Uterus (tissue), 4 donors: ENCODE measurements at regions of chr19 and their contacts with region 1.

Region 1: DNA sequence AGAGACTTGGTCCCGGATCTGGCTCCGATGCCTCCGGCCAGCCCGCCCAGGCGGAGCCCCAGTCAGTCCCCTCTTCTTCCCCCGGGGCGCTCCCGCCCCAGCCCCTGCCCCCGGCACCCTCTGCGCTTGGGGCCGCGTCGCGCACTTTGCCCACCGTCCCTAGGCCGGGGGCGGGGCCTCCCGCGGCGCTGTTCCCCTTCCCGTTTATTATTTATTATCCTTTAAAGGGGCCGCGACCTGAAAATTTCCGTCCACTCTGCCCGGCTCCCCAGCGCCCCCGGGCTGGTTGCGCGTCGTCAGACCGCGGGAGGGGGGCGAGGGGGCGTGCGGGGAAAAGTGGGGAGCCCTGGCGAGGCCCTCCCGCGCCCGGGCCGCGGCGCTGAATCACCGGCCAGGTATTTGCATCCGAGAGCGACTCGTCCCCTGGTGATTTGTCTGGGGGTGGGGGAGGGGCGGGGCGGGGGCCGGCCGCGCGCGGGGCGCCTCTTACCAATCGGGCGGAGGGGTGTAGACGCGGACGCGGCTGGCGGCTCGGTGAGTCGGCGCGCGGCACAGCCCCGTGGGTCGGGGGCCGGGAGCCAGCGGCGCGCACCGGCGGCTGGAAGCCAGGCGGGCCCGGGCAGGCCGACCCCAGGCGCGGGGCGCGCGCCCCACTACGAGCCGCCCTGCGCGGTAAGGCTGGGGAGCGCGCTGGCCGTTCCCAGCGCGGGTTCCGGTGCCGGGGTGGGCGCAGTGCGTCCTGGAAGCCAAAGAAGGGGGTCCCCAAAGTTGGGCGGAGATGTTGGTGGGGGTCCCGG is at the start of gene ARID3A:
- DNase-seq: peak; percentile 77 to 78
- H3K4me3 ChIP-seq: peak within 1 kb of the TSS; percentile 53 to 74
- H3K27ac ChIP-seq: peak within 1 kb of the TSS; percentile 79 to 80
- H3K4me1 ChIP-seq: peaks cover 0 to 6% of the 10 kb centered on the region in 2 donors
- H3K27me3 ChIP-seq: peaks cover 3 to 8% of the 10 kb centered on the region in 2 donors
- CTCF ChIP-seq: peak in 1 of 4 experiments; percentile 2
- POLR2A ChIP-seq: peak in 1 of 2 donors; percentile 65
- total RNA-seq, gene ARID3A: 1.3 to 22.0 (median 3.8) TPM

Region 2: DNA sequence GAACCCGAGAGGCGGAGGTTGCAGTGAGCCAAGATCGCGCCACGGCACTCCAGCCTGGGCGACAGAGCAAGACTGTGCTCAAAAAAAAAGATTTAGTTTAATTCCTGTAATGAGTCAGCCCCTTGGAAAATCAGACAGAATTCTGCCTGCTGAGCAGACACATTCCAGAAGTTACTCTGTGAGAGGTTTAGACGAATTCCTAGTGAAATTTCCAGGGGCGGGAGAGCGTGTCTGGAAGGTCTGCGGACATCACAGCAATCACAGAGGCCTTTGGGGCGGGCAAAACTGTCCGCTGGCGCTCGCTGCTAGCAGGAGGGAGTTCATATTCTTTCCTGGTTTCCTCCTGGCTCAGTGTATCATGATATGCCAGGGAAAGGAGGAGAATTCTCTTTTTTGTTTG is 157.3 kb before region 1 on chr19:
- intact Hi-C with region 1: loop called (anchors 10 kb)
- DNase-seq: no peak
- H3K4me3 ChIP-seq: no peak overlapping the region
- H3K27ac ChIP-seq: peak overlapping the region in 1 of 2 donors; percentile 25
- H3K4me1 ChIP-seq: no peaks in the 10 kb centered on the region
- H3K27me3 ChIP-seq: no peaks in the 10 kb centered on the region
- CTCF ChIP-seq: no peak
- POLR2A ChIP-seq: no peak

Region 3: DNA sequence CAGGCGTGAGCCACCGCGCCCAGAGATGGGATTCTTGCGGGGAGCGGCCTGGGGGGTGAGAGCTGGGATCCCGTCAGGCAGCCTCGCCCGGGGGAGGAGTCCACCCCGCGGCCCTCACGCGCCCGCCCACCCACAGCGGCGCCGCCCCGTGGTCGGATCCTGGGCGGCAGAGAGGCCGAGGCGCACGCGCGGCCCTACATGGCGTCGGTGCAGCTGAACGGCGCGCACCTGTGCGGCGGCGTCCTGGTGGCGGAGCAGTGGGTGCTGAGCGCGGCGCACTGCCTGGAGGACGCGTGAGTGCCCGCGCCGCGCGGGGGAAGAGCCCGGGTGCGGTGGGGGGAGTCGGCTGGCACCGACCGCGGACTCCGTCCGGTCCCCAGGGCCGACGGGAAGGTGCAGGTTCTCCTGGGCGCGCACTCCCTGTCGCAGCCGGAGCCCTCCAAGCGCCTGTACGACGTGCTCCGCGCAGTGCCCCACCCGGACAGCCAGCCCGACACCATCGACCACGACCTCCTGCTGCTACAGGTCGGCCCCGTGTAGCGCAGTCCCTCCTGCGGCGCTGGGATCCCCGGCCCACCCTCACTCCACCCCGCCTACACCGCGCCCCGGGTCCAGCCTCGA is 65.1 kb before region 1 on chr19:
- intact Hi-C with region 1: no loop called
- DNase-seq: no peak
- H3K4me3 ChIP-seq: peak overlapping the region in 1 of 2 donors; percentile 7
- H3K27ac ChIP-seq: peak overlapping the region in 1 of 2 donors; percentile 27
- H3K4me1 ChIP-seq: peaks cover 0 to 17% of the 10 kb centered on the region in 2 donors
- H3K27me3 ChIP-seq: peaks cover 0 to 25% of the 10 kb centered on the region in 2 donors
- CTCF ChIP-seq: peak in 1 of 4 experiments; percentile 31
- POLR2A ChIP-seq: peak in 1 of 2 donors; percentile 25

Region 4: DNA sequence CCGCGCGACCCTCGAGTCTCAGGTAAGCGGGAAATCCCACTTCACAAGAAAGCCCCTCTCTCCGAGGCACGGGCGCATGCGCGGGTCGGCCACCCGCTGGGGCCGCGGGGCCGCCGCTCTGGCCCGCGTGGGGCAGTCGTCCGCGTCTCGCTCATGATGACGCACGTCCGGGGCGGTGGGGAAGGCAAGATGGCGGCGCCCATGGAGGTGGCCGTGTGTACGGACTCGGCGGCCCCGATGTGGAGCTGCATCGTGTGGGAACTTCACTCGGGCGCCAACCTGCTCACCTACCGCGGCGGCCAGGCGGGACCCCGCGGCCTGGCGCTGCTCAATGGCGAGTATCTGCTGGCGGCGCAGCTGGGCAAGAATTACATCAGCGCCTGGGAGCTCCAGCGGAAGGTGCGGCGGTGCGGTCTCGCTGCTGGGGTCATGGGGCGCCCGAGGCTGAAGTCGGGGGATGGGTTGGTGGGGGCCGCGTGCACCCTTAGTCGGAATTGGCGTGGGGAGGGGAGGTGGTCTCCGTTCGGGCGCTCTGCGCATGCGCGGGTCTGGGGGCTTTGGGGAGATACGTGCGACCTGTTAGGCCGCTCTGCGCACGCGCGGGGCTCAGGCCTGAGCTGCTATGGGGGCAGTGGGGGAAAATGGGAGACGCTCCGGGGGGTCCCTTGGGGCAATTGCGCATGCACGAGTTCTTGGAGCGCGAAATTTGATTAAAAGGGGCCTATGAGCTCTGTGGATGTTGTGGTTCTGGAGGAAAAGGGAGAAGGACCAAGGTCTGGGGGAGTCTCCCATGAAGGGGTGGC is 58.6 kb after region 1 on chr19 and contains the start of gene WDR18:
- intact Hi-C with region 1: loop called (anchors 2 kb)
- DNase-seq: peak; percentile 93
- H3K4me3 ChIP-seq: peak within 1 kb of the TSS; percentile 84 to 100
- H3K27ac ChIP-seq: peak within 1 kb of the TSS; percentile 81 to 91
- H3K4me1 ChIP-seq: peaks cover 6 to 12% of the 10 kb centered on the region in 2 donors
- H3K27me3 ChIP-seq: no peaks in the 10 kb centered on the region
- CTCF ChIP-seq: peak in 3 of 4 experiments; percentile 7 to 66 (median 63)
- POLR2A ChIP-seq: peak; percentile 43 to 75
- total RNA-seq, gene WDR18: 13.6 to 34.9 (median 17.3) TPM

Region 5: DNA sequence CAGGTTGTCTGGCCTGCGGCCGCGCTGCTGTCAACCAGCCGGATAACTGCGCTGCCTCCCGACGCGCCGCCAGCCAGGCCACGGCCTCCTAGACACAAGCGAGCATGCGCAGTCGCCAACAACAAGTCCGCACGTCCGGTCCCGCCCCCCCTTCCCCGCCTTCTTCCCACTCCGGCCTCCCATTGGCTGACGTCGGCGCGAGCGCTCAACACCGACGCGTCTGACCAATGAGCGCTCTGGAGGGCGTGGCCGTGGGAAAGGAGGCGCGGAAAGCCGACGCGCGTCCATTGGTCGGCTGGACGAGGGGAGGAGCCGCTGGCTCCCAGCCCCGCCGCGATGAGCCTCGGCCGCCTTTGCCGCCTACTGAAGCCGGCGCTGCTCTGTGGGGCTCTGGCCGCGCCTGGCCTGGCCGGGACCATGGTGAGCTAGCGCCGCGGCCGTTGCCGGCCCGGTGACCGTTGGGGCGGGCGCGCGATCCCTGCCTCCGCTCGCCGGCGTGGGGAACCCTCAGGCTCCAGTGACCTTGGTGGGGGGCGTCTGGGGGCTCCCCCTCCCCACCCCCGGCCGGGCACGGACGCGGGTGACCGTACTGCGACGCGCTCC is 178.1 kb after region 1 on chr19 and contains the start of gene GPX4:
- intact Hi-C with region 1: loop called (anchors 10 kb)
- DNase-seq: peak; percentile 99
- H3K4me3 ChIP-seq: peak within 1 kb of the TSS; percentile 57 to 91
- H3K27ac ChIP-seq: peak within 1 kb of the TSS; percentile 96 to 100
- H3K4me1 ChIP-seq: peaks cover 16 to 19% of the 10 kb centered on the region in 2 donors
- H3K27me3 ChIP-seq: no peaks in the 10 kb centered on the region
- CTCF ChIP-seq: peak in 1 of 4 experiments; percentile 30
- POLR2A ChIP-seq: peak; percentile 97
- total RNA-seq, gene GPX4: 68.2 to 357 (median 163) TPM

Region 6: DNA sequence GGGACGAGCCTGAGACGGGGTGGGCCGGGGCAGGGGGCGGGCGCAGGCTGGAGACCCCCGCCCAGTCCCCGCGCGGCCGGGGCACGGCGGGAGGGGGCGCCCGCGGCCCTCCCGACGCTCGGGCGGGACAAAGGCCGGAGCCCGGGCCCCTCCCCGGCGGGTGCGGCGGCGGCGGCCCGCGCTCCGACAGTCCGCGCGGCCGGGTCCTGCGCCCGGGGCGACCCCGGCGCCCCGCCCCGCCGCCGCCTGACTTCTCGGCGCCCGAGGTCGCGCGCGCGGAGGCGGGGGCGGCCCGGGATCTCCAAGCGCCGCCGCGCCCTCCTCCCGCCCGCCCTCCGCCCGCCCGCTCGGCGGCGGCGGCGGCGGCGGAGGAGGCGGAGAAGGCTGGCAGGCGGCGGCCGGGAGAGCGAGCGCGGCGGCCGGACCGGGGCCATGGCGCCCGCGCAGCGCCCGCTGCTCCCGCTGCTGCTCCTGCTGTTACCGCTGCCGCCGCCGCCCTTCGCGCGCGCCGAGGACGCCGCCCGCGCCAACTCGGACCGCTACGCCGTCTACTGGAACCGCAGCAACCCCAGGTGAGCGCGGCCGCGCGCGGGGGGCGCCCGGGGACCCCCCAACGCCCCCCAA is 360.1 kb after region 1 on chr19 and contains the start of gene EFNA2:
- intact Hi-C with region 1: no loop called
- DNase-seq: no peak
- H3K4me3 ChIP-seq: no peak within 1 kb of the TSS
- H3K27ac ChIP-seq: no peak within 1 kb of the TSS
- H3K4me1 ChIP-seq: peaks cover 0 to 5% of the 10 kb centered on the region in 2 donors
- H3K27me3 ChIP-seq: peaks cover 22 to 29% of the 10 kb centered on the region in 2 donors
- CTCF ChIP-seq: no peak
- POLR2A ChIP-seq: no peak
- total RNA-seq, gene EFNA2: 0.76 TPM in 1 of 4 donors, not detected in the others